Mammary epithelial cell (primary cell): ENCODE measurements at regions of chr1 and their contacts with region 1.

Region 1: GRCh38 chr1:215132156-215132555 is 49.6 kb downstream of the KCNK2 start:
- DNase-seq: no peak
- H3K4me3 ChIP-seq: no peak overlapping the region
- H3K27ac ChIP-seq: no peak overlapping the region
- H3K4me1 ChIP-seq: no peaks in the 10 kb centered on the region
- H3K27me3 ChIP-seq: no peaks in the 10 kb centered on the region
- CTCF ChIP-seq: no peak

Region 2: DNA sequence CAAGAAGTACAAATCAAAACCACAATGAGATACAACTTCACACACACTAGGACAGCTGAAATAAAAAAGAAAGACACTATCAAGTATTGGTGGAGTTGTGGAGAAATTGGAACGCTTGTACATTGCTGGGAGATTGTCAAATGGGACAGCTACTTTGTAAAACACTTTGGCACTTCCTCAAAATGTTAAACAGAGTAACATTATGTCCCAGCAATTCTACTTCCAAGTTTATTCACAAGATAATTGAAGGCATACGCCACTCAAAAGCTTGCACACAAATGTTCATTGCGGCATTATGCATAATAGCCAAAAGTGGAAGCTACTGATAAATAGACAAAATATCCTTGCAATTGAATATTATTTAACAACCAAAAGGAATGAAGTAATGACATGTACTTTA is 249.5 kb before region 1 on chr1:
- CTCF ChIA-PET with region 1: no interaction called
- dilution Hi-C with region 1: no loop called
- in situ Hi-C with region 1: no loop called
- intact Hi-C with region 1: no loop called
- DNase-seq: no peak
- H3K4me3 ChIP-seq: no peak overlapping the region
- H3K27ac ChIP-seq: no peak overlapping the region
- H3K4me1 ChIP-seq: no peaks in the 10 kb centered on the region
- H3K27me3 ChIP-seq: no peaks in the 10 kb centered on the region
- CTCF ChIP-seq: no peak

Region 3: DNA sequence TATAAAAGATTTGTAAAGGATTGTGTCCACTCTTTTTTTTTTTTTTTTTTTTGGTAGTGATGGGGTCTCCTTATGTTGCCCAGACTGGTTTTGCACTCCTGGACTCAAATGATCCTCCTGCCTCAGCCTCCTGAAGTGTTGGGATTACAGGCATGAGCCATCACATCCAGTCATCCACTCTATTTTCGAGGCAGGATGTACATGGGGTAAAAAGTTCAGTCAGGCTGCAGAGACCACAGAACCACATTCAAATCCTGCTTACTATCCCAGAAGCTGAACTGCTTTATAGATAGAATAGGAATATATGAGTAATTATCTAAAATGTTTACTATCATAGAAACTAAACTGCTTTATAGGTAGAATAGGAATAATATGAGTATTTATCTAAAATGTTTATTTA is 75.6 kb before region 1 on chr1:
- CTCF ChIA-PET with region 1: no interaction called
- dilution Hi-C with region 1: no loop called
- in situ Hi-C with region 1: no loop called
- intact Hi-C with region 1: no loop called
- DNase-seq: peak; percentile 42
- H3K4me3 ChIP-seq: no peak overlapping the region
- H3K27ac ChIP-seq: no peak overlapping the region
- H3K4me1 ChIP-seq: no peaks in the 10 kb centered on the region
- H3K27me3 ChIP-seq: no peaks in the 10 kb centered on the region
- CTCF ChIP-seq: no peak

Region 4: GRCh38 chr1:215082532-215083382 is 49.4 kb before region 1 on chr1 and contains the start of gene KCNK2:
- CTCF ChIA-PET with region 1: no interaction called
- dilution Hi-C with region 1: loop called (anchors 5 kb)
- in situ Hi-C with region 1: no loop called
- intact Hi-C with region 1: no loop called
- DNase-seq: no peak
- H3K4me3 ChIP-seq: peak within 1 kb of the TSS; percentile 52 to 60 (median 52)
- H3K27ac ChIP-seq: no peak within 1 kb of the TSS
- H3K4me1 ChIP-seq: peaks cover 13% of the 10 kb centered on the region
- H3K27me3 ChIP-seq: peaks cover 19% of the 10 kb centered on the region
- CTCF ChIP-seq: no peak
- total RNA-seq, gene KCNK2: 0.67 TPM in 1 of 2 donors, not detected in the other